A673 (cell line): ENCODE measurements at regions of chr5 and their contacts with region 1.

Region 1: DNA sequence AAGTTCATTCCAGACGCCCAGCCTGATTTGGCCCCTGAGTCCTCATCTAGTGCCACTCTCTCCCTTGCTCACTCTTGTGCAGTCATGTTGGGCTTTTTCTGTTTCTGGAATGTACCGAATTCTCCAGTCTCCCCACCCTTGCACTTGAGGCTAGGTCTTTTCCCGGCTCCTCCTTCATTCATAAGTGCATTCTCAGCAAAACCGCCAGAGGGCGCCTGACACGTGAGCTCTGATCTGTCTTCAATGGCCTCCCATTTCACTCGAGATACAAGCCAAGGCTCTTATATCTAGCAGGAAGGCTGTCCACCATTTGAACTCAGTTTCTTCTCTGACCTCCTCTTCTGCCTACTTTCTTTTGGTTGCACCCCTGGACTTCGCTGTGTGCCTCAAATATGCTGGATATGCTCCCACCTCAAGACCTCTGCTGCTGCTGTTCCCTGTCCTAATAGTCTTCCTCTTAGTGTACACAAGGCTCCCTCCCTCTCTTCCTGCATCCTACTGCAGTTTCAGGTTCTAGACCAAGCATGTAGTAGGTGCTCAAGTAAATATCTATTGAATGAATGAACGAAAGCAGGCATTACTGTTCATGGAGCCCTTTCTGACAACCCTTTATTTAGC is 568.1 kb upstream of the WWC1 start:
- DNase-seq: peak; percentile 90
- H3K4me3 ChIP-seq: no peak overlapping the region
- H3K27ac ChIP-seq: peak overlapping the region; percentile 39
- H3K4me1 ChIP-seq: peaks cover 53% of the 10 kb centered on the region
- H3K27me3 ChIP-seq: no peaks in the 10 kb centered on the region
- CTCF ChIP-seq: peak; percentile 87

Region 2: DNA sequence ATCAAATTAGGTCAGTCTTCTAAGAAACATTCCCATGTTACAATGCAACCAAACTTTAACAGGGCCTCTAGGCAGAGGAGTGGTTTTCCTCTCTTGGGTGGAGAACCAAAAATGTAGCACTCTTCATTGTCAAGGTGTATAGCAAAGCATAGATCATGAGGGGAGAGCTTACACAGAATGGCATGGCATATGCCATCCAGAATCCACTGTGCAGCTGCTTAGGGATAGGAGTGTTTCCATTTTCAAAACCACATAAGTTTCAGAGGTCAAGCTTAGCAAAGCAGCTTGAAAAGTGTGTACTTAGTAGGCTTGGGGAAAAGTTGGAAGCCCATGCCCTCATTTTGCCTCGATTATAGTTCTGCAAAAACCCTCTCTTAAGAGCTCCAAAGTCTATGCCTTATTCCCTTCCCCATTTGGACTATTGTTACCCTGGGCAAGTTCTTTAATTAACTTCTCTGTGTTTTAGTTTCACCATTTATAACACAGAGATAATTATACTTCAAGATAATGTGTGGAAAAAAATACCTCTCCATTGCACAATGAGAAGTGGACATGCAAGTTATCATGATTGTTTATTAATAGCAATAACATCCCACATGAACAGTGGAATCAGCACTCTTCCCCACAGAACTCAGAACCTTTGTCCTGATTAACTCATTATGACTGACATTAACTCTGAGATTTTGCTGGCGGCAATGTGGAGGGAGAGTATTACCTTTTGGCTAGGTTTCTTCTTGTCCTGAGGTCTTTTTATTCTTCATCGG is 169.2 kb after region 1 on chr5:
- CTCF ChIA-PET with region 1: no interaction called
- POLR2A ChIA-PET with region 1: no interaction called
- intact Hi-C with region 1: loop called (anchors 5 kb)
- DNase-seq: no peak
- H3K4me3 ChIP-seq: no peak overlapping the region
- H3K27ac ChIP-seq: peak overlapping the region; percentile 93
- H3K4me1 ChIP-seq: peaks cover 67% of the 10 kb centered on the region
- H3K27me3 ChIP-seq: no peaks in the 10 kb centered on the region
- CTCF ChIP-seq: no peak

Region 3: DNA sequence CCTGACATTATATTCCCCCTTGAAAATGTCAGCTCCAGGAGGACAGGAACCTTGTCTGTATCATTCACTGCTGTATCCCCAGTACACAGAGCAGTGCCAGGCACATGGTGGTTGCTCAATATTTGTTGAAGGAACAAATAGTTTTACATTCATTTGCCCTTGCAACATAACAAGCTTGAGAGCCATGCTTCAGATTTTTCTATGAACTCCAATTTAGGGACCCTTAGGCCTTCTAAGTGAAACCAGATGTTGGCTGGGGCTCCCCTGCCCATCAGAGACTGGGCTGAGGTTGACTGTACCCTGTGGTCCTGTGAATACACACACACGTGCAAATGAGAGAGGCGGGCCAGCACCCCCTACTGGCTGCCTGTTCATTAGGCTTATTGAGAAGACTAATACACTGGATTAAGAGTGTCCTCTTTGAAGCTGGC is 353.2 kb after region 1 on chr5:
- CTCF ChIA-PET with region 1: no interaction called
- POLR2A ChIA-PET with region 1: no interaction called
- intact Hi-C with region 1: loop called (anchors 10 kb)
- DNase-seq: peak; percentile 89
- H3K4me3 ChIP-seq: no peak overlapping the region
- H3K27ac ChIP-seq: peak overlapping the region; percentile 63
- H3K4me1 ChIP-seq: peaks cover 53% of the 10 kb centered on the region
- H3K27me3 ChIP-seq: no peaks in the 10 kb centered on the region
- CTCF ChIP-seq: peak; percentile 80

Region 4: DNA sequence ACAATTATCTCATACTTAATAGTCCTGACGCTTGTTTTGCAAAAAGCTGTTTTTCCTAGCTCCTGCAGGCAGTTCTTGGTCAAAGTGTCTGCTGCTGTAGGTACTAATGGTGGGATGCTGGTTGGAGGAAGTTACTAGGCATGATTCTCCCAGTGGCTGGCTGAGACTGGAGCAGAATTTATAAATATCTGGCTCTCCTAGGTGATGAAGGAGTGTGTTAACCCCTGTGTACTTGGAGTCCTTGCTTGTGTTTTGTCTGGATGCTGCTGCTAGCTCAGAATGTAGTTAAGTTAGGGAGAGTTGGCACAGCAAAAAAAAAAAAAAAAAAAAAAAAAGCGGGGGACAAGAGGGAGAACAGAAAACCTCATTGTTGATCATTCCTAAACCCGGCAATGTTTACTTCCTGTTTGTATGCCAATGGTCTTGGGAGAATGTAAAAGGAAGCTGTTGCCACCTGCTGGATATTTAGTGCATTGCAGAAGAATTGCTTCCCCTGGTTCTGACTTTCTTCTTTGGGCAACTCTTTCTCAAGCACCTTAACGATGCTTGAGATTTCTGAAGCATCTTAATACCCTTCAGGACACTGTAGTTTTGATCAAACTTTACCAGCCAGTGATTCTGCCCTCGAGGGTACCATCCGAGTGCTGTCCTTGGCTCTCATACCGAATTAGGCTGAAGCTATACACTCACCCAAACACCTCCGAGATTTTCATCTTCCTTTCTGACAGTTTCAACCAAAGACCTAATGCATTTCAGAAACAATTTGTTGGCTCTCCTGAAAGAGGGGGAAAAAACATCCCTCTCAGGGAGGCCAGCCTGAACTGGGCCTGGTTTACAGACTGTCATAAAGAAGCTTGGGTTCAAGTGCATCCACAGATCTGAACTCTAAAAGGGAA is 496.4 kb after region 1 on chr5:
- CTCF ChIA-PET with region 1: no interaction called
- POLR2A ChIA-PET with region 1: no interaction called
- intact Hi-C with region 1: loop called (anchors 10 kb)
- DNase-seq: peak; percentile 83
- H3K4me3 ChIP-seq: no peak overlapping the region
- H3K27ac ChIP-seq: peak overlapping the region; percentile 44
- H3K4me1 ChIP-seq: peaks cover 47% of the 10 kb centered on the region
- H3K27me3 ChIP-seq: no peaks in the 10 kb centered on the region
- CTCF ChIP-seq: peak; percentile 78